ENCODE measurements at regions of chr14 and their contacts with region 1.

Region 1: DNA sequence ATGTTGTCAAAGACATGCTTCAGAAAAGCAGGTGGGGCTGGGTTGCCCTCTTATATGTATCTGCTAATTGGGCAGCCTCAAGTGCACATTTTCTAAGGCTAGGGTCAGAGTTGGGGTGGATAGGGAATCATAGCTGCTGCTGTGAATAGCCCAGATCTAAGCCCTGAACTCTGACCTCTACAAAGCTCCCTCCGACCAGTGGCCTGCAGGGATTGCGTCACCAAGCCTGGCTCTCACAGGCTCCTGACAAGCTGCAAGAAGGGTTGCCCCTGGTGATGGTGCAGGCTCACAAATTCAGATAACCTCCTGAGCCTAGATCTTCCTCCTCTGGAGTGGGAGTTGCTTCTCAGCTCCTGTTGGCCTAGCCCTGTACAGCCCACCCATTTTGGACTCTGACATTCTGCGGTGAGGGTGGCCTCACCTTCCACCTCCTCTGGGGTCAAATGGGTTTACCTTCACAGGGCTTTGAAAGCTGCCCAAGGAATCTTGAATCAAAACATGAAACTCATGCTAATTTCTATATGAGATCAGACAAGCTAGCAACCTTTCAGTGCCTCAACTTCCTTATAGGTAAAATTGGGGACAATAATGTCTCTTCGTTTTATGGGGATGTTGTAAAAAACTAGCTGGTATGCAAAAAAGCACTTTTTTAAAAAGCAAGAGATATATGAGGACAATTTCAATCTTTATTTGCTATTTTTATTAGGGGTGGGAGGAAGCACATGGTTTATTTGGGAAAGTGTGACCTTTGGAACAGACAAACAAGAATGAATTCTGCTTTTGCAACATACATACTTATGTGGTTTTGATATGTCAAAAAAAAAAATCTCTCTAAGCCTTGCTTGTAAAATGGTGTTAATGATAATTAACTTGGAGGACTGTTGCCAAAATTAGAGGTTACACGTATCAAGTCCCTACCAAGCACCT is 4.9 kb upstream of the SUSD6 start:
- DNase-seq: no peak
- H3K4me3 ChIP-seq: no peak overlapping the region
- H3K27ac ChIP-seq: no peak overlapping the region
- H3K27me3 ChIP-seq: no peaks in the 10 kb centered on the region
- CTCF ChIP-seq: no peak

Region 2: DNA sequence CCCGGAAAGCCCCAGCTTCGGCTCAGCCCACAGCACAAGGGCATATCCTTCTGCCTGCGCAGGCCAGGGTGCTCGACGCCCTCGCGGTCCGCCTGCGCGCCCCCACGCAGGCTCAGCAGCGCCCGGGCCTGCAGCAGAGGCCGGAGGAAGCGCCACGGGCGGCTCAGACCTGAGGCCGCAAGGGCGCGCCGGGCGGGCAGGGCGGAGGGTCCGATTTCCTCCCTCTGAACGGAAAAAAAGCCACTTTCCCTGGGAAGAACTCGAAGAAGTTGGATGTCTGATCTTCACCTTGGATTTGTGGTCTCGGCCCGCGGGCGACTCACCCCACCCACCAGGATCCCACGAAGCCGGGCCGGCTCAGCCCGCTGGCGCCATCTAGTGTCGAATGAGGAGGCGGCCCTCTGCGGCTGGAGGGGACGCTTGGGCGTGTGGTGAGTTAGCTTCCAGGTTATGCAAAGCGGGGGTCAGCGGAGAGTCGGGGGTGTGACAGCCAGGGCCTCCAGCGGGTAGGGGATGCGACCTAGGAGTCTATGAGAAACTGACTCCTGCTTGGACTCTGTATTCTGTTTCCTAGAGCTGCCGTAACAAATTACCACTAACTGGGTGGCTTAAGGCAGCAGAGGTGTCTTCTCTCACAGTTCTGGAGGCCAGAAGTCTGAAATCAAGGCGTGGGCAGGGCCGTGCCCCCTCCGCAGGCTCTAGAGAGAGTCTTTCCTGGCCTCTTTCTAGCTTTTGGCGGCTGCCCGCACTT is 120.4 kb after region 1 on chr14:
- CTCF ChIA-PET with region 1: interaction called, 25 read pairs
- POLR2A ChIA-PET with region 1: no interaction called
- DNase-seq: peak; percentile 30
- H3K4me3 ChIP-seq: peak overlapping the region; percentile 50
- H3K27ac ChIP-seq: no peak overlapping the region
- H3K27me3 ChIP-seq: no peaks in the 10 kb centered on the region
- CTCF ChIP-seq: peak; percentile 97

Measured in AG04450 (cell line).